ENCODE measurements at regions of chr7 and their contacts with region 1.

Region 1: DNA sequence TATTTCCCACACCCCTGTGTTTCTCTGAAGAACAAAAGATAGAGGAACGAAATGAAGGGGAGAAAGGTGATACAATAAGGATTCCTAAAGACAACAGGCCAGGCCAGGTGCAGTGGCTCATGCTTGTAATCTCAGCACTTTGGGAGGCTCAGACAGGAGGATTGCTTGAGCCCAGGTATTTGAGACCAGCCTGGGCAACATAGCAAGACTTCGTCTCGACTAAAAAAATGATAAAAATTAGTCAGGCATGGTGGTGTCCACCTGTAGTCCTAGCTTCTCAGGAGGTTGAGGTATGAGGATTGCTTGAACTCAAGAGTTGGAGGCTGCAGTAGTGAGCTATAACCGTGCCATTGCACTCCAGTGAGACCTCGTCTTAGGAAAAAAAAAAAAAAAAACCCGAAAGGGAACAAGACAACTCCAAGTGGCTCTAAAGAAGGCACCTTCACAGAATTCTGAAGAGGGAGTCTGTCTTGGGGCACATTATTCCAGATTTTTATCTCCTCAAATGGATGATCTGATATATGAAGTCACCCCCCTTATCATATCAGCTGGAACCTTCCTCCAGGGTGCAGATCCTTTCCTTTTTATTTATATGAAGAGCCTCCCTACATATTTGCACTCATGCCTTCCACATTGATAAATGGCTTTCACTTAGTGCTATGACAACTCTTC is 41.5 kb upstream of the FAM3C start:
- DNase-seq: no peak
- H3K4me3 ChIP-seq: peak overlapping the region in 1 of 3 donors; percentile 25
- H3K27ac ChIP-seq: no peak overlapping the region
- H3K4me1 ChIP-seq: no peaks in the 10 kb centered on the region
- H3K27me3 ChIP-seq: no peaks in the 10 kb centered on the region
- CTCF ChIP-seq: no peak
- POLR2A ChIP-seq: no peak

Region 2: GRCh38 chr7:121376979-121377378 is 60.6 kb before region 1 on chr7:
- intact Hi-C with region 1: loop called (anchors 2 kb)
- DNase-seq: no peak
- H3K4me3 ChIP-seq: no peak overlapping the region
- H3K27ac ChIP-seq: no peak overlapping the region
- H3K4me1 ChIP-seq: no peaks in the 10 kb centered on the region
- H3K27me3 ChIP-seq: no peaks in the 10 kb centered on the region
- CTCF ChIP-seq: no peak
- POLR2A ChIP-seq: no peak

Region 3: DNA sequence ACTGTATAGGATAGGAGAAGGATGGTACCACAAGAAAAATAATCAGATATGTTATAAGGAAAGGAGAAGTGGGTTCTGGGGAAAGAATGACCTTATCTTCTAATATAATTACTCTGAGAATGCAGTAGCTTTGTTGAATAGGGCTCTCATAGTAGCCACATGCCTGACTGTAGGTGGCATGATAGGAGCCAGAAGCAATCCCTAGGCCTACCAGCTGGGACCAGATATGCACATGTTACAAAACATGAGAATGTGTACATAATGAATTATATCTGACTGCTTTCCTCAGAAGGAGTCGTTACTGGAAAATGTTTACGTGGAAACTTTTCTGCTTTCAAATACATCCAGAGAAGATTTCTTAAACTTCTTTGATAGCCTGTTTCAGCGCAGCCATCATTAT is 11.7 kb after region 1 on chr7:
- intact Hi-C with region 1: no loop called
- DNase-seq: no peak
- H3K4me3 ChIP-seq: no peak overlapping the region
- H3K27ac ChIP-seq: no peak overlapping the region
- H3K4me1 ChIP-seq: no peaks in the 10 kb centered on the region
- H3K27me3 ChIP-seq: no peaks in the 10 kb centered on the region
- CTCF ChIP-seq: no peak
- POLR2A ChIP-seq: no peak

Measured in breast epithelium (tissue), 4 donors.